Activated CD8-positive, alpha-beta T cell treated with anti-CD3 and anti-CD28 coated beads, Interleukin-2, amount 10 ng/mL, durations not matched to agents 7 days and 5 days (primary cell): ENCODE measurements at regions of chrX and their contacts with region 1.

Region 1: GRCh38 chrX:119606280-119607015 is at the start of gene NKRF:
- DNase-seq: peak; percentile 93
- ATAC-seq: peak; percentile 80
- H3K4me3 Mint-ChIP-seq: peak within 1 kb of the TSS; percentile 91
- H3K27ac Mint-ChIP-seq: peak within 1 kb of the TSS; percentile 95
- H3K4me1 Mint-ChIP-seq: peaks cover 28% of the 10 kb centered on the region
- H3K27me3 Mint-ChIP-seq: no peaks in the 10 kb centered on the region
- total RNA-seq, gene NKRF: 16.3 to 18.4 TPM

Region 2: DNA sequence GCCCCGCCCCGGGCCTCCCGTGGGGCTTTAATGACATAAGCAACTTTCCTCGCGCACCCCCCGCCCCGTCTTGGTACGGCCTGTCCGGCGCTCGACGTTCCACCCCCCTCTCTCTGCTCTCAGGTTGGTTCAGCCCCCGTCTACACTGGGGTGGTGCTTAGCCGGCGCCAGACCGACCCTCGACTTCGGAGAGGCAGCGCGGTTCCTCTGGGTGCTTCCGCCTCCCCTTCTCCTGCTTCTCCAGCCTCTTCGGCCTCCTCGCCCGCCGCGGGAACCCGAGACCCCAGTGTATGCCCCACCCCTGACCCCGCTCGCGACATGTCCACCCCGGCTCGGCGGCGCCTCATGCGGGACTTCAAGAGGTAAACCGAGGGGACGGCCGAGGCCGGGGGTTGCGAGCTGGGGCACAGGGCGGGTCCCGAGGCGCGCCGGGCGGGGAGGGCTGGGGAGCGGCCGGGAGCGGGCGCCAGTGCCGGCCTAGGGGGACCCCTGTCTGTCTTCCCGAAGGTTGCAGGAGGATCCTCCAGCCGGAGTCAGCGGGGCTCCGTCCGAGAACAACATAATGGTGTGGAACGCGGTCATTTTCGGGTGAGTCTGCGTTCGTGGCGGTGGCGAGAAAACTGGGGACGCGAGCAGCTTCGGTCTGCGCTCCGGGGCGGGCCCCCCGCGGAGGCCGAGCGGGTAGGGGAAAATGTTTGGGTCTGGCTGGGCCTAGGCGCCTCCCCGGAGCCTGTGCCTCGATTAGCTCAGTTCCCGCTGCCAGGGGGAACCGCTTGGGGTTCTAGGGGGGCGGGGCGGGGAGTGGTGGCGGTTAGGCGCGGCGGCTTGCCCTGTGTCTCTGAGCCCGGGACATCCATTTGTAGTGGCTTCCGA is 31.8 kb before region 1 on chrX and contains the start of gene UBE2A:
- CTCF ChIA-PET with region 1: interaction called, 5 read pairs
- POLR2A ChIA-PET with region 1: interaction called, 16 read pairs
- DNase-seq: peak; percentile 91
- ATAC-seq: peak; percentile 90
- H3K4me3 Mint-ChIP-seq: peak within 1 kb of the TSS; percentile 78
- H3K27ac Mint-ChIP-seq: peak within 1 kb of the TSS; percentile 85
- H3K4me1 Mint-ChIP-seq: peaks cover 29% of the 10 kb centered on the region
- H3K27me3 Mint-ChIP-seq: no peaks in the 10 kb centered on the region
- total RNA-seq, gene UBE2A: 91.8 to 93.9 TPM

Region 3: DNA sequence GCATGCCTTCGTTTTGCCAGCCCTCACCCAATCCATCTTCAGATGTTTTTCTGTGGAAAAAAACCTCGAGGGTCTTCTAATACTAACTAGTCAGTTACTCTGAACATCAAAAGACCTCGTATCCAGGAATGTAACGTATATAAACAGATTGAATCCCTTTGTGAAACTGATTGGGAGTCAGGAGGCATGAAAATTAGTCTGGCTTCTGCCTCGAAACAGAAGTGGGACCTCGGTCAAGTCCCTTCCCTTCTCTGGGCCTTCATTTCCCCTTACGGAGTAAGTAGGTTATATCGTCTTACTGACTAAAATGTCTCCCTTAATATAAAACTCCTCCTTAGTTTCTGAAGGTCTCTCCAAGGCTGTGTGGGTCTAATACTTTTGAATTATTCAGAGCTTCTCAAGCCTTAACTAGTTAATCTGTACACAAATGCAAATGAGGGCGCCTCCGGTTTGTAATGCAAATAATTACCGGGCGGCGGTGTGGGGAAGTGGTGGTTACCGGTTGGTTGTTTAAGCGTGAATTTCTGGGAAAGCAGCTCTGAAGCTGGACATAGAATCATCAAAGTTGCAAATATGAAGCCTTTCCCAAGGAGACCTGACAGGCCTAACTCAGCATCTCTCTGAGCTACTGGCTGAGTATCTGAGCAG is 11.2 kb after region 1 on chrX:
- CTCF ChIA-PET with region 1: interaction called, 3 read pairs
- POLR2A ChIA-PET with region 1: interaction called, 12 read pairs
- DNase-seq: no peak
- ATAC-seq: no peak
- H3K4me3 Mint-ChIP-seq: no peak overlapping the region
- H3K27ac Mint-ChIP-seq: no peak overlapping the region
- H3K4me1 Mint-ChIP-seq: no peaks in the 10 kb centered on the region
- H3K27me3 Mint-ChIP-seq: no peaks in the 10 kb centered on the region